ENCODE measurements at regions of chr17 and their contacts with region 1.

Region 1: GRCh38 chr17:57868007-57868909 is 18.4 kb upstream of the MRPS23 start:
- DNase-seq: peak; percentile 53
- ATAC-seq: peak; percentile 94
- H3K4me3 Mint-ChIP-seq: peak overlapping the region; percentile 24
- H3K27ac Mint-ChIP-seq: peak overlapping the region; percentile 65
- H3K4me1 Mint-ChIP-seq: peaks cover 29% of the 10 kb centered on the region
- H3K27me3 Mint-ChIP-seq: peaks cover 20% of the 10 kb centered on the region
- CTCF ChIP-seq: no peak

Region 2: GRCh38 chr17:57902800-57903759 is 34.8 kb after region 1 on chr17:
- CTCF ChIA-PET with region 1: no interaction called
- POLR2A ChIA-PET with region 1: no interaction called
- intact Hi-C with region 1: loop called (anchors 5 kb)
- DNase-seq: no peak
- ATAC-seq: peak; percentile 19
- H3K4me3 Mint-ChIP-seq: peak overlapping the region; percentile 39
- H3K27ac Mint-ChIP-seq: no peak overlapping the region
- H3K4me1 Mint-ChIP-seq: peaks cover 33% of the 10 kb centered on the region
- H3K27me3 Mint-ChIP-seq: peaks cover 14% of the 10 kb centered on the region
- CTCF ChIP-seq: no peak

Region 3: GRCh38 chr17:57975044-57975443 is 106.8 kb after region 1 on chr17:
- CTCF ChIA-PET with region 1: no interaction called
- POLR2A ChIA-PET with region 1: no interaction called
- intact Hi-C with region 1: no loop called
- DNase-seq: no peak
- ATAC-seq: no peak
- H3K4me3 Mint-ChIP-seq: no peak overlapping the region
- H3K27ac Mint-ChIP-seq: no peak overlapping the region
- H3K4me1 Mint-ChIP-seq: no peaks in the 10 kb centered on the region
- H3K27me3 Mint-ChIP-seq: no peaks in the 10 kb centered on the region
- CTCF ChIP-seq: no peak